Heart right ventricle (tissue), 16 donors: ENCODE measurements at regions of chr12 and their contacts with region 1.

Region 1: GRCh38 chr12:38906482-38907170 is 1.2 kb upstream of the CPNE8 start:
- DNase-seq: peak; percentile 87 to 90
- ATAC-seq: peak; percentile 80 to 89 (median 86)
- H3K4me3 ChIP-seq: peak overlapping the region; percentile 49 to 90 (median 72)
- H3K27ac ChIP-seq: peak overlapping the region; percentile 88 to 98 (median 95)
- H3K4me1 ChIP-seq: peaks cover 0 to 36% (median 23%) of the 10 kb centered on the region in 9 donors
- H3K27me3 ChIP-seq: peaks cover 0 to 3% (median 0%) of the 10 kb centered on the region in 7 donors
- CTCF ChIP-seq: peak; percentile 76 to 98 (median 89)

Region 2: GRCh38 chr12:38138225-38139221 is 768.1 kb before region 1 on chr12:
- intact Hi-C with region 1: loop called in 1 of 10 experiments (anchors 10 kb)
- DNase-seq: peak in 1 of 2 donors; percentile 67
- ATAC-seq: peak; percentile 34 to 80 (median 64)
- H3K4me3 ChIP-seq: peak overlapping the region in 9 of 10 donors; percentile 15 to 43 (median 29)
- H3K27ac ChIP-seq: no peak overlapping the region
- H3K4me1 ChIP-seq: peaks cover 0 to 11% (median 7%) of the 10 kb centered on the region in 9 donors
- H3K27me3 ChIP-seq: peaks cover 0 to 27% (median 19%) of the 10 kb centered on the region in 7 donors
- CTCF ChIP-seq: peak; percentile 93 to 99 (median 96)

Region 3: GRCh38 chr12:38316391-38317129 is 590.1 kb before region 1 on chr12 and contains the start of gene ALG10B:
- intact Hi-C with region 1: loop called in 2 of 10 experiments (anchors 5 to 10 kb)
- DNase-seq: peak; percentile 89 to 95
- ATAC-seq: peak; percentile 99 to 100 (median 100)
- H3K4me3 ChIP-seq: peak within 1 kb of the TSS; percentile 71 to 93 (median 79)
- H3K27ac ChIP-seq: peak within 1 kb of the TSS; percentile 67 to 92 (median 86)
- H3K4me1 ChIP-seq: peaks cover 0 to 18% (median 9%) of the 10 kb centered on the region in 9 donors
- H3K27me3 ChIP-seq: no peaks in the 10 kb centered on the region
- CTCF ChIP-seq: peak; percentile 57 to 89 (median 75)
- total RNA-seq, gene ALG10B: 4.4 to 7.4 (median 5.2) TPM

Region 4: DNA sequence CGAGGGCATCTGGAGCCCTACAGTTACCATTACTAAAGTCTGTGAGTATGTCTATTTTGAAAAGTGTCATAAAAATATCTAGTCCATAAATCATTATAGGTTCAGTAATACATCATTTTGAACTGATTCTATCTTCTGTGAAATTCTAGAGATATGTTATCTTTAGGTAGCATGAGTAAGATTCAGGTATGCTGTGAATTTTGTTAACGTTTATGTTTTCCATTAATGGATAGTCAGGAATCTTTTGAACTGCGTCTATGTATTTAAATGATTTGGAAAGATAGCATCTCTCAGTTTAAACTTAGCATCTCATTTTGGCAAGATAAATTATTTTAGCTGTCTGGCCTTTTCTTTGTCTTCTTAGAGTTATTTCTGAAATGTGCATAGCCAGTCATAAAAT is 581.7 kb before region 1 on chr12:
- intact Hi-C with region 1: loop called in 2 of 10 experiments (anchors 5 to 10 kb)
- DNase-seq: no peak
- ATAC-seq: no peak
- H3K4me3 ChIP-seq: no peak overlapping the region
- H3K27ac ChIP-seq: no peak overlapping the region
- H3K4me1 ChIP-seq: peaks cover 0 to 4% (median 0%) of the 10 kb centered on the region in 9 donors
- H3K27me3 ChIP-seq: no peaks in the 10 kb centered on the region
- CTCF ChIP-seq: no peak

Region 5: GRCh38 chr12:38664661-38665269 is 241.9 kb before region 1 on chr12:
- intact Hi-C with region 1: loop called in 3 of 10 experiments (anchors 10 kb)
- DNase-seq: no peak
- ATAC-seq: no peak
- H3K4me3 ChIP-seq: no peak overlapping the region
- H3K27ac ChIP-seq: no peak overlapping the region
- H3K4me1 ChIP-seq: peaks cover 0 to 8% (median 0%) of the 10 kb centered on the region in 9 donors
- H3K27me3 ChIP-seq: no peaks in the 10 kb centered on the region
- CTCF ChIP-seq: peak in 7 of 9 donors; percentile 19 to 59 (median 37)

Region 6: GRCh38 chr12:38813923-38814322 is 92.7 kb before region 1 on chr12:
- intact Hi-C with region 1: no loop called
- DNase-seq: no peak
- ATAC-seq: no peak
- H3K4me3 ChIP-seq: no peak overlapping the region
- H3K27ac ChIP-seq: no peak overlapping the region
- H3K4me1 ChIP-seq: no peaks in the 10 kb centered on the region
- H3K27me3 ChIP-seq: no peaks in the 10 kb centered on the region
- CTCF ChIP-seq: no peak

Region 7: GRCh38 chr12:39103552-39104165 is 197.0 kb after region 1 on chr12:
- intact Hi-C with region 1: loop called in 5 of 10 experiments (anchors 5 kb)
- DNase-seq: peak in 1 of 2 donors; percentile 33
- ATAC-seq: peak; percentile 71 to 94 (median 87)
- H3K4me3 ChIP-seq: no peak overlapping the region
- H3K27ac ChIP-seq: no peak overlapping the region
- H3K4me1 ChIP-seq: no peaks in the 10 kb centered on the region
- H3K27me3 ChIP-seq: peaks cover 0 to 4% (median 0%) of the 10 kb centered on the region in 7 donors
- CTCF ChIP-seq: peak; percentile 68 to 90 (median 79)

Region 8: DNA sequence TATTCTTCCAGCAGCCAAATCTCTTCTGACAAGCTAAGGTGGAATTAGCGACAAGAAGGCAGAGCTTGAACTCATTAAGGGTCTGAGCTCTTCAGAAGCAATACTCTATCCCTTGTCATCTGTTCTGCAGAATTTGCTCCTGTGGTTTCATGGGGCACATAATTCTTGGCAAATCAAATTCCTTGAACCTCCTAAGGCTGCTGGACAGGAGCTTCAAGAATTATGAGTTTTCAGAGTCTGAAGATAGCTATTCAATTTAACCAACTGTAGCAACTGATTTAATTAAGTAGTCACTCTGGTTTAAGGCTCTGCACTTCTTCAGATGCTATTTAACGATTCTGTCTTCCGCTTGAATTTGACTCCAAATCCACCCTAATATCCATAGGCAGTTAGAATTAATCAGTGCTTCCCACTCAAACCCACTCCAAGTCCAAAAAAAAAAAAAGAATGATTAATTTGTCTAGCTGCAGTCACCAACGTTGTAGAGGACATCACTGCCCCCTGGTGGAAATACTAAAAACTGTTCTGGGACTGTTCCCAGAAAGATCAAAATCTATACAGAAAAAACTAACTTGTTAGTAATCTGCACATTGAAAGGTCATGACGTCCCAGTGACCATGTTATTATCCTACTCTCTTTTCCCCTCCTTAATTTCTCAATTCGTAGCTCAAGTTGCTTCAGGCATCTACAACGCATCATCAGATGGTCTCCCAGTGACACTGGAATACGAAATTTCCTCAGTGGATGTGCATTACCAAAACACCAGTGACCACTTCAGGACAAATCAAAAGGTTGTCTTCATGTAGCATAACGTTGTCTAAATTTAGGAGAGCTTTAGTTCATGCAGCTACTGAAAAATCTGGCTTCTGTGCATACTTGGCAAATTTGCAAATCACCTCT is 366.5 kb after region 1 on chr12:
- intact Hi-C with region 1: loop called in 1 of 10 experiments (anchors 10 kb)
- DNase-seq: peak in 1 of 2 donors; percentile 12
- ATAC-seq: no peak
- H3K4me3 ChIP-seq: no peak overlapping the region
- H3K27ac ChIP-seq: no peak overlapping the region
- H3K4me1 ChIP-seq: no peaks in the 10 kb centered on the region
- H3K27me3 ChIP-seq: no peaks in the 10 kb centered on the region
- CTCF ChIP-seq: peak; percentile 37 to 81 (median 67)